Activated CD4-positive, alpha-beta T cell treated with anti-CD3 and anti-CD28 coated beads for 36 hours (primary cell): ENCODE measurements at regions of chr3 and their contacts with region 1.

Region 1: GRCh38 chr3:141471160-141471559 is 15.7 kb upstream of the RASA2 start:
- DNase-seq: no peak
- ATAC-seq: no peak
- H3K4me3 Mint-ChIP-seq: no peak overlapping the region
- H3K27ac Mint-ChIP-seq: no peak overlapping the region
- H3K4me1 Mint-ChIP-seq: peaks cover 11% of the 10 kb centered on the region
- H3K27me3 Mint-ChIP-seq: no peaks in the 10 kb centered on the region

Region 2: GRCh38 chr3:141514382-141514781 is 43.2 kb after region 1 on chr3:
- CTCF ChIA-PET with region 1: interaction called, 12 read pairs
- POLR2A ChIA-PET with region 1: no interaction called
- intact Hi-C with region 1: no loop called
- DNase-seq: no peak
- ATAC-seq: peak; percentile 63
- H3K4me3 Mint-ChIP-seq: no peak overlapping the region
- H3K27ac Mint-ChIP-seq: peak overlapping the region; percentile 66
- H3K4me1 Mint-ChIP-seq: peaks cover 61% of the 10 kb centered on the region
- H3K27me3 Mint-ChIP-seq: no peaks in the 10 kb centered on the region